Tibial artery (tissue), 4 donors: ENCODE measurements at regions of chr20 and their contacts with region 1.

Region 1: DNA sequence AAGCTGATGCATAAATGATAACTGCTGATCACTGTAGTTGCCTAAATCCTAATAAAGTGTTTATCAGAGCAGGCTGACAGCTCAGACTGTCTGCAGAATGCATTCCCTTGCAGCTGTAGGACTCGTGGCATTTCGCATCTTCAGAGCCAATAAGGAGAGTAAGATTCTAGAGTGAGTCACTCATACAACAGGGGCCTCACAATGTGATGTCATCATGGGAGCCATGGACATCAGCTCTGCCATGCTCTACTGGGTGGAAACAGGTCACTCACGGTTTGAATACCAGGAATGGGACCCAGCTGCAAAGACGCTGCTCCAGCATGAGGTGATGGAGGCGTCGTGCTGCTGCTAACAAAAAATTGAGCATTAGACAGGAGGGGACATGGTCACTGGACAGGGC is 7.4 kb downstream of the FAM209B start:
- DNase-seq: no peak
- H3K4me3 ChIP-seq: no peak overlapping the region
- H3K27ac ChIP-seq: no peak overlapping the region
- H3K4me1 ChIP-seq: no peaks in the 10 kb centered on the region
- H3K27me3 ChIP-seq: no peaks in the 10 kb centered on the region
- CTCF ChIP-seq: no peak

Region 2: GRCh38 chr20:56587307-56588108 is 47.1 kb after region 1 on chr20:
- intact Hi-C with region 1: no loop called
- DNase-seq: no peak
- H3K4me3 ChIP-seq: no peak overlapping the region
- H3K27ac ChIP-seq: no peak overlapping the region
- H3K4me1 ChIP-seq: no peaks in the 10 kb centered on the region
- H3K27me3 ChIP-seq: peaks cover 0 to 3% of the 10 kb centered on the region in 2 donors
- CTCF ChIP-seq: no peak

Region 3: DNA sequence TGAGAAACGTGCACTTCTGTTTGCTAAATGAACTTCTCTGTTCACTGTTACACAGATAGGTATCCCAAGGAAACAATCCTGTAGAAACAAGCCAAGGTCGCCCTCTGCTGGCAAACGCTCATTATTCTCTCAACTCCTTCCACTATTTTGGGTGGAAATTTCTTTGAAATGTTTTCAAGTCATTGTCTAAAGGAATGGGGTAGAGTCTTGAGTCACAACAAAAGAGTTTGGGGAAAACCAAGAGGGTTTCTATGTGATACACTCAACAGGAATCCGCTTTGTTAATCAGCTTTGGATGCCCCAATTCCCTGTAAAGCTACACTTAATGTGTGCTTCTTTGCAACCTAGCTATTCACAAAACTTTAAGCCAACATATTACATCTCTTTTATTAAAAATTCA is 806.1 kb after region 1 on chr20:
- intact Hi-C with region 1: loop called (anchors 10 kb)
- DNase-seq: peak in 1 of 2 donors; percentile 73
- H3K4me3 ChIP-seq: no peak overlapping the region
- H3K27ac ChIP-seq: no peak overlapping the region
- H3K4me1 ChIP-seq: peaks cover 0 to under 1% (median 0%) of the 10 kb centered on the region in 4 donors
- H3K27me3 ChIP-seq: peaks cover 0 to 10% of the 10 kb centered on the region in 2 donors
- CTCF ChIP-seq: peak; percentile 58 to 65